IMR-90 (cell line): ENCODE measurements at regions of chr1 and their contacts with region 1.

Region 1: GRCh38 chr1:115138968-115139367 is 49.7 kb upstream of the TSPAN2 start:
- DNase-seq: peak; percentile 94
- ATAC-seq: peak; percentile 79
- H3K4me3 ChIP-seq: no peak overlapping the region
- H3K27ac ChIP-seq: peak overlapping the region; percentile 1; the same call in 1 of the 2 replicates
- H3K4me1 ChIP-seq: peaks cover 15% of the 10 kb centered on the region
- H3K27me3 ChIP-seq: no peaks in the 10 kb centered on the region
- CTCF ChIP-seq: peak; percentile 98
- POLR2A ChIP-seq: peak; percentile 51; the same call in 1 of the 2 replicates
- RAD21 ChIP-seq: peak; percentile 100

Region 2: DNA sequence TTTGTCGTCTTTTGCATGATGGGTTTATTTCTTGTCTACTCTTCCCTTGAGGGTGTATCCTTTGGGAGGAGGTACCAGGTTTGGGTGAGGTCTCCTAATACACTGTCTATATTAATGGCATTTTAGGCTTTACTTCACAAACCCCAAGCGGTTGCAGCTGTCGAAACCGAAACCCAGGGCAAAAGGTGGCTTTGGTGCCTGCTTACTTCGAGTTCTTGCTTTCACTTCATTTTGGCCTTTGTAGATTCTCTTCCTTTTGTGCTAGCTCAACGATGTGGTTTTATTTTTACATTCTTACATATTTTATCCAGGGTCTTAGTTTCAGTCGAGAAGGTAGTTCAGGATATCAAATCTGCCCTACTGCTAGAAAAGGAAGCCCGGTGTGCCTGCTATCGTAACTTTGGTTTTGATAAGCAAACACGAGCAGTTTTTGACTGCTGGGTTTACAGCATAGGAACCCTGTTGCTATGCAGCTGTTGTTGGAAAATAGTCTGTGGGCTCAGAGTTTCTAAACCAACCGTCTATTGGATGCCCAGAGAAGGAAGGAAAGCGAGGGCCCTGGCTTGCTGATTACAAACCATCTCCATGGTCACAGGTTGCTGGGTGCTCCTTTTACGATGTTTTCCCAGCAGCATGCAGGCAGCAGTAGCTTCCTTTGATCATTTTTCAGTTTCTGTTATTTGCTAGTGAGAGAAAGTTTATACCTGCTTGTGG is 39.8 kb before region 1 on chr1:
- CTCF ChIA-PET with region 1: no interaction called
- POLR2A ChIA-PET with region 1: no interaction called
- dilution Hi-C with region 1: no loop called
- in situ Hi-C with region 1: no loop called
- intact Hi-C with region 1: no loop called
- DNase-seq: peak; percentile 26
- ATAC-seq: peak; percentile 67
- H3K4me3 ChIP-seq: no peak overlapping the region
- H3K27ac ChIP-seq: no peak overlapping the region
- H3K4me1 ChIP-seq: peaks cover 2% of the 10 kb centered on the region; the same call in 1 of the 2 replicates
- H3K27me3 ChIP-seq: no peaks in the 10 kb centered on the region
- CTCF ChIP-seq: no peak
- POLR2A ChIP-seq: no peak
- RAD21 ChIP-seq: no peak

Region 3: DNA sequence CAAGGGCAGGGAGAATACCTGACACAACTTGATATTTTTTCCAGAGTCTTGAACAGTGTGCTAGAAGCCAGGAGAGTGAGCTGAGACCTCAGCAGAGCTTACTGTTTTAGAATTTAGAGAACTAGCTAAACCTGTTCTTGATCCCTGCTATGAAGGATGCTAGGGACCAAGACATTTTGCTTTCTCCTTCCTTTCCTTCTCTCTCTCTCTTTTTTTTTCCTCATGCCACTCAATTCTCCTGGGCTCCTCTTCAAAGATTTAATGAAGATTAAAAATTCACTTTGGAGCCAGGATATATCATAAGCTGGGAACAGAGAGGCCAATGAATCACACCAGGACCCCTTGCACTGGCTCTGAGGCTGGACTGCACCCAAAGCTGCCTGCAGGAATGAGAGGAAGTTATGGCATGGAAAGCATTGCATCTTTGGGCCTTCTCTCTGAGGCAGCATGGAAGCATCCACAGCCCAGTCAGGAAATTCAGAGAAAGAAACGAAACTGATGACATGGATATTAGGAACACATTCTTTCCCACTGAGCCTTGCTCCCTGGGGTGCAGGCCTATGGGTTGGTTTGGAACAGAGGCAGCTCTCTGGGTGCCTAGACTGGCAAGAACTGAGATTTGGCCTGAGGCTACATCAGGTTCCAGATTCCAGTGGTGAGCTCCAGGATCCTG is 100.3 kb after region 1 on chr1:
- CTCF ChIA-PET with region 1: no interaction called
- POLR2A ChIA-PET with region 1: no interaction called
- dilution Hi-C with region 1: no loop called
- in situ Hi-C with region 1: no loop called
- intact Hi-C with region 1: loop called (anchors 5 kb)
- DNase-seq: peak; percentile 76
- ATAC-seq: peak; percentile 92
- H3K4me3 ChIP-seq: no peak overlapping the region
- H3K27ac ChIP-seq: peak overlapping the region; percentile 42; the same call in 1 of the 2 replicates
- H3K4me1 ChIP-seq: peaks cover 6% of the 10 kb centered on the region
- H3K27me3 ChIP-seq: no peaks in the 10 kb centered on the region
- CTCF ChIP-seq: no peak
- POLR2A ChIP-seq: no peak
- RAD21 ChIP-seq: no peak

Region 4: DNA sequence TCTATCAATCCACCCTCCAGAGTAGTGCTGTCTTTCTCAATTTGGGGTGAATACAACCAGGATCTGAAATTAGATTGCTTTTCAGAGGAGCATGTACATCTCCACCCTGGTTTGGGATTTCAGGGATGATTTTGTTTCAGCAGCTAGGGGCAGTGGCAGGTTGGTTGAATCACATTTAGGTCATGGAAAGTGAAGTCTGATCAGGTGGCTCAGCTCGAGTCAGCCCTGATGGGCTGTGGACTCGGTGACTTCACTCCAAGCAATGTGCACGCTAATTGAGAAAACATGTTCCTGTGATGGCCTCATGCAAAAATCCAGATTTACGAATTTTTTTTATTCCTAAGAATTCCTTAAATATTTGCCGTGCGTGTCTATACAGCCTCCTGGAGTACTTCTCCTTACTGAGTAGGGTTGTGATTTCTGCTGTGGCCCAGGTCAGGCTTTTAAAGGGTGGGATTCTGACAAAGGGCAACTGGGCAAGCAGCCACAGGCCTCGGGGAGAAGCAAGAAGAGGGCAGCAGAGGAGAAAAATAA is 191.6 kb after region 1 on chr1:
- CTCF ChIA-PET with region 1: interaction called, 3 read pairs
- POLR2A ChIA-PET with region 1: no interaction called
- dilution Hi-C with region 1: no loop called
- in situ Hi-C with region 1: no loop called
- intact Hi-C with region 1: loop called (anchors 1 kb)
- DNase-seq: peak; percentile 96
- ATAC-seq: peak; percentile 78
- H3K4me3 ChIP-seq: no peak overlapping the region
- H3K27ac ChIP-seq: peak overlapping the region; percentile 88
- H3K4me1 ChIP-seq: peaks cover 22% of the 10 kb centered on the region
- H3K27me3 ChIP-seq: no peaks in the 10 kb centered on the region
- CTCF ChIP-seq: peak; percentile 41
- POLR2A ChIP-seq: 0 out of 2 replicates have a peak, but pooled peaks have one; percentile 47
- RAD21 ChIP-seq: peak; percentile 32; the same call in 1 of the 2 replicates

Region 5: DNA sequence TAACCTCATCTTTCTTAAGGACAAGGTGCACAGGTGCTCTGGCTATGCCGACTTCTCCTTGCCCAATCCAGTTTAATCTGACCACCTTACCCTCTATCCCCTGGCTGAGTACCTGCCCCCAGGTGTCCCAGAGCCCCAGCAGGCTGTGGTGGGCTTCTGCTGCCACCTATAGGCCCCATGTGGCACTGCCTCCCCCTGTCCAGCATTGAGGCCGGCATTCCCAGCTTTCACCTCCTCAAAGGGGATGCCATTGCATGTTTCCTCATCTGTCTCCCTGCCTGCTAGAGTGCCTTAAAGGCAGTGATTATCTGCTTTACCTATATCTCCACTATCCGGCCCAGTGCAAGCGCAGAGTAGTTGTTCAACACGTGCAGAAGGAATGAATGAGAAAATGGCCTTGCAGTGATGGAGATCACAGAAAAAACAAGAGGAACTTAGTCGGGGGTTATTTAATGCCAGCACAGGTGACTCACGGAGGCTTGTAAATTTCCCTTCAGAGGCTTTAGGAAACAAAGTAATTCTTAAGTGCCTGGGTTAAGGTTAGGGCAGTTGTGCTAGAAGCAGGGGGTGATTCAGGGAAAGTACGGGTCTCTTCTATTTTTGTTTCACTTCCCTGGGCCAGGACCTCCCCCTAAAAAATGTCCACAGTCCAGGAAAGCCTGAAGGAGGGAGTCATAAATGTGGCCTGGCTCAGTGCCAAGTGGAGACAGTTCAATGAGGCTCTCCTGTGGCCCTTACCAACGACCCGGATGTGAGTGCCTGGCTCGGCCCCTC is 330.9 kb after region 1 on chr1:
- CTCF ChIA-PET with region 1: interaction called, 63 read pairs
- POLR2A ChIA-PET with region 1: no interaction called
- dilution Hi-C with region 1: no loop called
- in situ Hi-C with region 1: loop called (anchors 5 kb)
- intact Hi-C with region 1: loop called (anchors 1 kb)
- DNase-seq: peak; percentile 55
- ATAC-seq: peak; percentile 91
- H3K4me3 ChIP-seq: no peak overlapping the region
- H3K27ac ChIP-seq: no peak overlapping the region
- H3K4me1 ChIP-seq: 0 out of 2 replicates have a peak, but pooled peaks cover 2% of the 10 kb centered on the region
- H3K27me3 ChIP-seq: no peaks in the 10 kb centered on the region; the same call in 1 of the 2 replicates
- CTCF ChIP-seq: peak; percentile 93
- POLR2A ChIP-seq: no peak
- RAD21 ChIP-seq: peak; percentile 97

Region 6: DNA sequence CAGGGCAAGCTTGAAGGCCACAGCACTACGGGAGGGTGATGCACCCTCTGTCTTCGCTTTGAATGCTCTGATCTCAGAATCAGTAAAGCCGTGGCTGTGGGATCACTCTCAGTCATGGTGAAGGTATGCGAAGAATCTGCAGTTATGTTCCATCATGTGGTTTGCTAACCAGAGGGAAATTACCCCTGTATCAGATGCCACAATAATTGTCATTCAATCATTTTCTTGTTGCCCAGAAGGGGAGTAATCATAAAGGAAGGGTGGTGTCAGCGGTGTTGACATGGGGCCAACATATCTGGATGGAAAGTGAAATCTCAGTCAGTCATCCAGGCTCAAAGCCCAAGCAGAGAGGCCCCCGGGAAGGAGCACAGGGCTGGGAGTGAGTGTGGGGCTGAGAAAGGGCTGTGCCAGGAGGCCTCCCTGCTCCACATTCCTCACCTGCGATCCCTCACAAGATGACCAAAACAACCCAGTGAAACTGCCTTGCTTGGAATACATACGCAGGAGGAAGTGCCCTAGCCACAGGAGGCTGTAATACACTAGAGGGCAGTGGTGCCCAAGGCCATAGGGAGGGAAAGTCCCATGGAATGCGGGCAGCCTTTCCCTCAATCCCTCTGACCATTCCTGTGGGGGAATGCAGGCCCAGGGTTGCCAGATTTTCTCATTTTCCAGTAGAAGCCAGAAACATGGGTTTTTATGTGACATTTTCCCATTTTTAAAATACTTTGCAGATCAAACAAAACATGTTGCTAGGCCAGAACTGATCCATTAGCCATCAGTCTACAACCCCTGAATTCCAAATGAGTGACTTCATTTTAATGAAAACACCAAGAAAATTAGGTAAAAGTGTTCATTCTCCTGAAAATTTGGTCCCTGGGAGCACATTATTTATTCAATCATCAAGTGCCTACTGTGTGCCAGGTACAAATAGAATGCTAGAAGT is 407.1 kb after region 1 on chr1:
- CTCF ChIA-PET with region 1: no interaction called
- POLR2A ChIA-PET with region 1: no interaction called
- dilution Hi-C with region 1: no loop called
- in situ Hi-C with region 1: no loop called
- intact Hi-C with region 1: loop called (anchors 1 kb)
- DNase-seq: peak; percentile 95
- ATAC-seq: peak; percentile 93
- H3K4me3 ChIP-seq: no peak overlapping the region
- H3K27ac ChIP-seq: peak overlapping the region; percentile 80
- H3K4me1 ChIP-seq: peaks cover 15% of the 10 kb centered on the region
- H3K27me3 ChIP-seq: 0 out of 2 replicates have a peak, but pooled peaks cover 2% of the 10 kb centered on the region
- CTCF ChIP-seq: peak; percentile 75
- POLR2A ChIP-seq: peak; percentile 63; the same call in 1 of the 2 replicates
- RAD21 ChIP-seq: peak; percentile 71

Region 7: GRCh38 chr1:115771847-115772457 is 633.0 kb after region 1 on chr1:
- CTCF ChIA-PET with region 1: no interaction called
- POLR2A ChIA-PET with region 1: no interaction called
- dilution Hi-C with region 1: no loop called
- in situ Hi-C with region 1: no loop called
- intact Hi-C with region 1: loop called (anchors 5 kb)
- DNase-seq: peak; percentile 80
- ATAC-seq: peak; percentile 99
- H3K4me3 ChIP-seq: no peak overlapping the region
- H3K27ac ChIP-seq: no peak overlapping the region
- H3K4me1 ChIP-seq: no peaks in the 10 kb centered on the region
- H3K27me3 ChIP-seq: peaks cover 8% of the 10 kb centered on the region
- CTCF ChIP-seq: peak; percentile 90
- POLR2A ChIP-seq: no peak
- RAD21 ChIP-seq: peak; percentile 85